ENCODE measurements at regions of chr2 and their contacts with region 1.

Region 1: GRCh38 chr2:35410431-35411061 is 945.0 kb upstream of the CRIM1 start:
- DNase-seq: no peak
- ATAC-seq: no peak
- H3K4me3 ChIP-seq: no peak overlapping the region
- H3K27ac ChIP-seq: no peak overlapping the region
- H3K4me1 ChIP-seq: no peaks in the 10 kb centered on the region
- H3K27me3 ChIP-seq: no peaks in the 10 kb centered on the region
- CTCF ChIP-seq: peak in 4 of 5 experiments; percentile 30 to 71 (median 54)
- POLR2A ChIP-seq: no peak

Region 2: DNA sequence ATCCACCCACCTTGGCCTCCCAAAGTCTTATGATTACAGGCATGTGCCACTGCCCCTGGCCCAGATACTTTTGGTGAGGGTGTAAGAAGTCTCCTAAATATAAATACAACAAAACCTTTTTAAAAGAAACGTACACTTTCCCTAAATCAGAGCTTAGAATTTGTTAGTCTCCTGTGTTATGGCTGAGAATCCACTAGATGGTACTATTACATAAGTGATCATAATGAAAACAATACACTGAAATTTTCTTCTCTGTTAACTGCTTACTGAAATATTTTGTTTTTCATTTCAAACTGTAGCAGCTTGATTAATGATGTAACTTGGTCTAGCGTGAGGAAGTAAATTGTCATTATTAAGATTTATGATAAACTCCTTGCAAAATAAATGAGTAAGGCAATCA is 1736.6 kb before region 1 on chr2:
- in situ Hi-C with region 1: no loop called
- intact Hi-C with region 1: loop called (anchors 10 kb)
- DNase-seq: no peak
- ATAC-seq: no peak
- H3K4me3 ChIP-seq: no peak overlapping the region
- H3K27ac ChIP-seq: no peak overlapping the region
- H3K4me1 ChIP-seq: no peaks in the 10 kb centered on the region
- H3K27me3 ChIP-seq: no peaks in the 10 kb centered on the region
- CTCF ChIP-seq: peak in 1 of 5 experiments; percentile 36
- POLR2A ChIP-seq: no peak

Region 3: DNA sequence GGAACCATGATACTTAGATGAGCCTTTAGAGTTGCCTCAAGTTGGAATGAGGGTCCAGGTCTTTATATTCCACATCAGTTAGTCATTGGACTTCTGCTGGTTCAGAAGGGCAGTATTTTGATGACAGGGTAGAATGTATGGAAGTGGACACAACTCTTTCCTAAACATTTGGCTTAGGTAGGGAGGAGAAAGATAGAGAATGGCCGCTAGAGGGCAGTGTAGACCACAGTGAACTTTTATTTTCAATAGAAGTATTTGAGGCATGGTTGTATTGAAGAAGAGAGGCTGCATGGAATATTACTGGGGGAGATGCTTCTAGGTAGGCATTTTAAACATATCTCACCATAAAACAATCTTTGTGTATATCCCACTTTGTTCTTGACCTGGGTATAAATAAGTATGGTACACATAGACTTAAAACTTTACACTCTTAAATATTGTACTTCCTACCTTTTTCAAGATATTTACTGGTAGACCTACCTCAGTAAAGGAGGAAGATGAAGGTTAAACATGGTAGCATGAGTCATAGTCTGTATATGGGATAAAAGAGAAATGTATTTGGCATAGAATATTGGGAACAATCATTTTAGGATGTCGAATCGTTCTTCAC is 1313.9 kb before region 1 on chr2:
- in situ Hi-C with region 1: loop called in 1 of 4 experiments (anchors 25 kb)
- intact Hi-C with region 1: no loop called
- DNase-seq: no peak
- ATAC-seq: no peak
- H3K4me3 ChIP-seq: no peak overlapping the region
- H3K27ac ChIP-seq: no peak overlapping the region
- H3K4me1 ChIP-seq: no peaks in the 10 kb centered on the region
- H3K27me3 ChIP-seq: no peaks in the 10 kb centered on the region
- CTCF ChIP-seq: peak in 4 of 5 experiments; percentile 21 to 68 (median 48)
- POLR2A ChIP-seq: no peak